Activated CD4-positive, alpha-beta memory T cell treated with anti-CD3 and anti-CD28 coated beads for 36 hours (primary cell): ENCODE measurements at regions of chr3 and their contacts with region 1.

Region 1: DNA sequence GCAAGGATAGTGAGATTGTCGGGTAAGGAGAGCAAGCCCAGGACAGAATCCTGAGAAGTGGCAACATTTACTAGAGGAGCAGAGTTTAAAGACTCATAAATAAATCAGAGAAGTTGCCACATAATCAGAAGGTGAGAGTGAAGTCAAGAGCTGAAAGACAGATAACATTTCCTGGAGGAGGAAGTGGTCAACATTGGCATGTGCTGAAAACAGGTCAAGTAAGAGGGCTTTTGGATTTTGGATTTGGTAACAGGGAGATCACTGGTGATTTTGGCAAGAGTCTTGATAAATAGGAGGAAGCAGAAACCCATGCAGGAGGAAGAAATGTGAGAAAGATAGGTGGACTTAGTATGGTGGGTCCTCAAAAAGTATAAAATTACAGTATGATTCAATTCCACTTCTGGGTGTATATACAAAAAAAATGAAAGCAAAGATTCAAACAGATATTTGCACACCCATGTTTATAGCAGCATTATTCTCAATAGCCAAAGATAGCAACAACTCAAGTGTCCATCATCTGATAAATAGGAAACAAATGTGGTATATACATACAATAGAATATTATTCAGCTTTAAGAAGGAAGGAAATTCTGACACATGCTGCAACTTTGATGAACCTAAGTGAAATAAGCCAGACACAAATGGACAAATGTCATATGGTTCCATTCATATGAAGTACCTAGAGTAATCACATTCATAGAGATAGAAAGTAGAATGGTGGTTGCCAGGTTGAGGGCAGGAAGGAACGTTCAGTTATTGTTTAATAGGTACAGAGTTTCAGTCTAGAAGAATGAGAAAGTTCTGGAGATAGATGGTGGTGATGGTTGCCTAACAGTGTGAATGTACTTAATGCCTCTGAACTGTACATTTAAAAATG is 27.3 kb upstream of the MBNL1 start:
- DNase-seq: no peak
- H3K4me3 Mint-ChIP-seq: peak overlapping the region; percentile 84
- H3K27ac Mint-ChIP-seq: peak overlapping the region; percentile 88
- H3K4me1 Mint-ChIP-seq: peaks cover 59% of the 10 kb centered on the region
- H3K27me3 Mint-ChIP-seq: no peaks in the 10 kb centered on the region

Region 2: GRCh38 chr3:151305101-151305750 is 936.2 kb before region 1 on chr3:
- CTCF ChIA-PET with region 1: no interaction called
- POLR2A ChIA-PET with region 1: no interaction called
- intact Hi-C with region 1: loop called (anchors 5 kb)
- DNase-seq: peak; percentile 52
- H3K4me3 Mint-ChIP-seq: peak overlapping the region; percentile 20
- H3K27ac Mint-ChIP-seq: peak overlapping the region; percentile 56
- H3K4me1 Mint-ChIP-seq: peaks cover 78% of the 10 kb centered on the region
- H3K27me3 Mint-ChIP-seq: peaks cover 17% of the 10 kb centered on the region

Region 3: GRCh38 chr3:151395806-151396205 is 845.6 kb before region 1 on chr3:
- CTCF ChIA-PET with region 1: no interaction called
- POLR2A ChIA-PET with region 1: no interaction called
- intact Hi-C with region 1: no loop called
- DNase-seq: no peak
- H3K4me3 Mint-ChIP-seq: no peak overlapping the region
- H3K27ac Mint-ChIP-seq: no peak overlapping the region
- H3K4me1 Mint-ChIP-seq: no peaks in the 10 kb centered on the region
- H3K27me3 Mint-ChIP-seq: peaks cover 2% of the 10 kb centered on the region

Region 4: GRCh38 chr3:152177757-152178156 is 63.6 kb before region 1 on chr3:
- CTCF ChIA-PET with region 1: no interaction called
- POLR2A ChIA-PET with region 1: no interaction called
- intact Hi-C with region 1: no loop called
- DNase-seq: no peak
- H3K4me3 Mint-ChIP-seq: no peak overlapping the region
- H3K27ac Mint-ChIP-seq: no peak overlapping the region
- H3K4me1 Mint-ChIP-seq: peaks cover 42% of the 10 kb centered on the region
- H3K27me3 Mint-ChIP-seq: no peaks in the 10 kb centered on the region

Region 5: GRCh38 chr3:152193673-152194267 is 47.6 kb before region 1 on chr3:
- CTCF ChIA-PET with region 1: interaction called, 4 read pairs
- POLR2A ChIA-PET with region 1: interaction called, 57 read pairs
- intact Hi-C with region 1: loop called (anchors 1 kb)
- DNase-seq: peak; percentile 58
- H3K4me3 Mint-ChIP-seq: peak overlapping the region; percentile 78
- H3K27ac Mint-ChIP-seq: peak overlapping the region; percentile 85
- H3K4me1 Mint-ChIP-seq: peaks cover 81% of the 10 kb centered on the region
- H3K27me3 Mint-ChIP-seq: no peaks in the 10 kb centered on the region

Region 6: GRCh38 chr3:152222327-152222726 is 19.1 kb before region 1 on chr3:
- CTCF ChIA-PET with region 1: interaction called, 4 read pairs
- POLR2A ChIA-PET with region 1: no interaction called
- intact Hi-C with region 1: loop called (anchors 1 kb)
- DNase-seq: no peak
- H3K4me3 Mint-ChIP-seq: peak overlapping the region; percentile 42
- H3K27ac Mint-ChIP-seq: peak overlapping the region; percentile 77
- H3K4me1 Mint-ChIP-seq: peaks cover 72% of the 10 kb centered on the region
- H3K27me3 Mint-ChIP-seq: no peaks in the 10 kb centered on the region

Region 7: DNA sequence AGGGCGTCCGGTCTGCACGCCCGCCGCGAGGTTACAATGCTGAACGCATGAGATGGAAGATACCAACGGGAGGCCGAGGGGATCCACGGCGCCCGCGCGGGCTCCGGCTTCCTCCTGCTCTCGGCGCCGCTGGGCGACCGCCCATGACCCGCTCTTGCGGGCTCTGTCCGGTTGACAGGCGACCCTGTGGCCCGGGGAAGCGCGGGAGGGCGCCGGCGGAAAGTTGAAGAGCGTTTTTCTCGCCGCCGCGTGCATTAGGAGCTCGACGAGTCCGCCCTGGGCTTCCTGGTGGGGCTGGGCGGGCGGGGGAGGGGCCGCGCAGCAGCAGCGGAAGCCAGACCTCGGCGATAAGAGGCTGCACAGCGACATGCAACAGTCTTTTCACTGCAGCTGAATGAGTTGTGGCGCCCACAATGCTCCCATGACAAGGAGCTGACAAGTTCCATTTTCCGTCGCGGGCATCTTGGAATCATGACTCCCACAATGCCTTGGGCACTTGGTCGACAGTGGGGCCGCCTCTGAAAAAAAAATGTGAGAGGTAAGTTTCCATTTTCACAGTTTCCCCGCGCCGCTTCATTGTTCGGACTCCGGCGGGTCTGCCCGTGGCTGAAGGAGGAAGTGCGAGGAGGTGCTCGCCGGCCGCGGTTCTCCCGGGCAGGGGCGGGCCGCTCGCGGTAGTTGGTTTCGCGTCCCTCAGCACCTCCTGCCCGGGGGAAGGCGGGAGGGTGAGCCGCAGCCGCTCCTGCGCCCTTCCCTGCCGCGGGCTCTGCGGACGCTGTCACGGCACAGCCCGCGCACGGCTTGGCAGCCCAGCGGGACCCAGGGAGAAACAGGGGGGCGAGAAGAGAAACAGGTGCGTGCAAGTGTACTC is 27.4 kb after region 1 on chr3 and contains the start of gene MBNL1:
- CTCF ChIA-PET with region 1: interaction called, 5 read pairs
- POLR2A ChIA-PET with region 1: interaction called, 107 read pairs
- intact Hi-C with region 1: loop called (anchors 1 kb)
- DNase-seq: peak; percentile 93
- H3K4me3 Mint-ChIP-seq: peak within 1 kb of the TSS; percentile 84
- H3K27ac Mint-ChIP-seq: peak within 1 kb of the TSS; percentile 84
- H3K4me1 Mint-ChIP-seq: peaks cover 52% of the 10 kb centered on the region
- H3K27me3 Mint-ChIP-seq: no peaks in the 10 kb centered on the region
- total RNA-seq, gene MBNL1: 290 to 302 TPM